IMR-90 (cell line): ENCODE measurements at regions of chr1 and their contacts with region 1.

Region 1: DNA sequence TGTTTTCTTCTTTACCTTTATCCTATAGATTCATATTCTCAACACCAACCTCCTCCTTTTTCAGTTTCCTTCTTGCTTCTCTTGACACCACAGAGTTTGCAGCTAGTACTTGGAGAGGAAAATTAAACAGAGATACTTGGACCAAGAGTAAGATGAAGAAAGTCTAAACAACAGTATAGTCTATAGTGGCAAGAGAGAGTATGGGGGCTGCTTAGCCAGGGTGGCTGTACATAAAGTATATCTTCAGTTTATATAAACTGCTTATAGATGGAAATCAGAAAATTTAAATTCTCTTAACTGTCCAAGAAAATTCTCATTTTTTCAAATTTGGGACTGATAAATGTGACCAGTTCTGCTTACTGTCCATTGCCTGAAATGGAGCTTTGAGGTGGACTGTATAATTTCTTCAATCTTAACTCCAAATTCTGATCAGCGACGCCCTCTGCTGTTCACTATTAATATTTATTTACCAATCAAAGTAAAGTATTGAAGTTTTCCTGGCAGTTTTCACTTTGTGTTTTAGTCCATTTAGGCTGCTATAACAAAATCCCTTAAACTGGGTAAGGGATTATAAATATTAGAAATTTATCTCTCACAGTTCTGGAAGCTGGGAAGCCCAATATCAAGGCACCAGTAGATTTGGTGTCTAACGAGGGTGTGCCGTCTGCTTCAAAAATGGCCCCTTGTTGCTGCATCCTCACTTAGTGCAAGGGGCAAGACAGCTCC is 14.8 kb upstream of the METTL18 start:
- DNase-seq: peak; percentile 35
- ATAC-seq: peak; percentile 86
- H3K4me3 ChIP-seq: no peak overlapping the region
- H3K27ac ChIP-seq: no peak overlapping the region
- H3K4me1 ChIP-seq: no peaks in the 10 kb centered on the region
- H3K27me3 ChIP-seq: no peaks in the 10 kb centered on the region
- CTCF ChIP-seq: peak; percentile 55
- POLR2A ChIP-seq: no peak
- RAD21 ChIP-seq: peak; percentile 50

Region 2: GRCh38 chr1:169003864-169004516 is 805.5 kb before region 1 on chr1:
- CTCF ChIA-PET with region 1: no interaction called
- POLR2A ChIA-PET with region 1: no interaction called
- dilution Hi-C with region 1: no loop called
- in situ Hi-C with region 1: no loop called
- intact Hi-C with region 1: no loop called
- DNase-seq: no peak
- ATAC-seq: no peak
- H3K4me3 ChIP-seq: no peak overlapping the region
- H3K27ac ChIP-seq: no peak overlapping the region
- H3K4me1 ChIP-seq: no peaks in the 10 kb centered on the region
- H3K27me3 ChIP-seq: no peaks in the 10 kb centered on the region
- CTCF ChIP-seq: no peak
- POLR2A ChIP-seq: no peak
- RAD21 ChIP-seq: no peak

Region 3: GRCh38 chr1:169260478-169261151 is 548.9 kb before region 1 on chr1:
- CTCF ChIA-PET with region 1: no interaction called
- POLR2A ChIA-PET with region 1: no interaction called
- dilution Hi-C with region 1: no loop called
- in situ Hi-C with region 1: no loop called
- intact Hi-C with region 1: no loop called
- DNase-seq: no peak
- ATAC-seq: no peak
- H3K4me3 ChIP-seq: no peak overlapping the region
- H3K27ac ChIP-seq: no peak overlapping the region
- H3K4me1 ChIP-seq: no peaks in the 10 kb centered on the region
- H3K27me3 ChIP-seq: no peaks in the 10 kb centered on the region
- CTCF ChIP-seq: no peak
- POLR2A ChIP-seq: no peak
- RAD21 ChIP-seq: no peak

Region 4: DNA sequence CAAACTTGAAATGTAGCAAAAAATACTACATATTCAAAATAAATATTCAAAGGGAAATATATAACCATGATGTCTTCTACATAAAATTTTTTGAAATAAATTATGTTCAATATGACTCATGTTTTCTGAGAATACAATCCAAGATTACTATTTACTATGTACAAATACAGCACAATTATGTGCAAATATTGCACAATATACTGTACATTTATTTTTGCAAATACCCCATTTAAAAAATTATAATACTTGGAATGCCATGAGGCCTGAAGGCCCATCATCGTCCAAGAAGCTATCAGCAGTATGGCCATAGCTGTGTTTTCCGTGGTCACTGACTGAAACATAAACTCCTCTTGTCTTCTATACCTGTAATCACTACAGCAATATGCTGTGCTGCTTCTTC is 394.6 kb before region 1 on chr1:
- CTCF ChIA-PET with region 1: no interaction called
- POLR2A ChIA-PET with region 1: no interaction called
- dilution Hi-C with region 1: no loop called
- in situ Hi-C with region 1: no loop called
- intact Hi-C with region 1: no loop called
- DNase-seq: no peak
- ATAC-seq: no peak
- H3K4me3 ChIP-seq: no peak overlapping the region
- H3K27ac ChIP-seq: no peak overlapping the region
- H3K4me1 ChIP-seq: no peaks in the 10 kb centered on the region
- H3K27me3 ChIP-seq: no peaks in the 10 kb centered on the region
- CTCF ChIP-seq: no peak
- POLR2A ChIP-seq: no peak
- RAD21 ChIP-seq: no peak

Region 5: DNA sequence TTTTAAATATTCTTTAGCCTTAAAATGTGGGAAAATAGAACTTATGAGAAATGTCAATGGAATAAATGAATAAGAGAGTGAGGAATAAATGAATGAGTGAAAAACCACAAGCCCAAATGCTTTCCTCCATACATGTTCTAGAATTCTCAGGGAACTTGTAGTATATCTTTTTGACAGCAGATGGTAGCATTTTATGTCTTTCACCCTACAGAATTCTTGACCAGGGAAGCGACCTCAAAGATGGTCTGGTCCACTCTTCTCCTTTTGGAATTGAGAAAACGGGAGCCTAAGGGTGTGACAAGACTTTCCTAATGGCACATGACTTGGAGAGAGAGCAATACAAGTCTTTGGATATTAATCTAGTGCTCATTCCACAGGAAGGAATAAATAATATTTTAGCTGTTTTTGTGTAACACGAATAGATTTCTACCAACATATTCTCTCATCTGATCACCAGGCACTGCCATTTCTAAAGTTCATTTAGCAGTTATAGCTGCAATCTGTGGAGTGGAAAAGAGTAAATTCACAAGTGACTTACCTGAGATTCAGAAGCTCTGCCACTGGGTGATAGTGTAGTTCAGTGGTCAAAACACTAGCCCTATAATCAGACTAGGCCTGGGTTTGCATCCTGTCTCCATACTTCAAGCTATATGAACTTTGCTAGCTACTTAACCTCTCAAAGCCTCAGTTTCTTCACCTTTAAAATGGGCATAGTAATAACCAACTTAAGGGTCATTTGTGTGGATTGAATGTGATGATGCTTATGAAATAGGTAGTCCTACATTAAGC is 208.2 kb before region 1 on chr1:
- CTCF ChIA-PET with region 1: interaction called, 3 read pairs
- POLR2A ChIA-PET with region 1: no interaction called
- dilution Hi-C with region 1: no loop called
- in situ Hi-C with region 1: no loop called
- intact Hi-C with region 1: loop called (anchors 1 kb)
- DNase-seq: peak; percentile 20
- ATAC-seq: peak; percentile 37; the same call in 1 of the 2 replicates
- H3K4me3 ChIP-seq: no peak overlapping the region
- H3K27ac ChIP-seq: no peak overlapping the region
- H3K4me1 ChIP-seq: no peaks in the 10 kb centered on the region
- H3K27me3 ChIP-seq: no peaks in the 10 kb centered on the region
- CTCF ChIP-seq: peak; percentile 35
- POLR2A ChIP-seq: no peak
- RAD21 ChIP-seq: peak; percentile 40

Region 6: DNA sequence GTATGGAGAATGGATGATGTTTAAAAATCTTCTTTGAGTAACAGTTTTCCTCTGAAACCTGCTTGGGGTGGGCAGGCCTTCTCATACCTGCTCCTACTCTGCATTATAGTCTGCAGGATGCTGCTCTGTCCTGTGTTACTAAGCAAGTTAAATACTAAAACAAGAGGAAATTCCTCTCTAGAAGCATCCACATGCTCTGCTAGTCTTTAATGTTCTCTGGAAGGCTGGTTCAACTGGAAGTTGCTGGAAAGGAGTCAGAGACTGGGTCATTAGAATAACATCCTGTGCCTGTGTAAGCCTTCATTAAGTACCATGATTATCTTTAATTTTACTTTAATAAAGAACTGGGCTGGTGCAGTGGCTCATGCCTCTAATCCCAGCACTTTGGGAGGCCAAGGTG is 185.4 kb before region 1 on chr1:
- CTCF ChIA-PET with region 1: no interaction called
- POLR2A ChIA-PET with region 1: no interaction called
- dilution Hi-C with region 1: no loop called
- in situ Hi-C with region 1: no loop called
- intact Hi-C with region 1: no loop called
- DNase-seq: no peak
- ATAC-seq: no peak
- H3K4me3 ChIP-seq: no peak overlapping the region
- H3K27ac ChIP-seq: no peak overlapping the region
- H3K4me1 ChIP-seq: no peaks in the 10 kb centered on the region
- H3K27me3 ChIP-seq: no peaks in the 10 kb centered on the region
- CTCF ChIP-seq: no peak
- POLR2A ChIP-seq: no peak
- RAD21 ChIP-seq: no peak